MCF 10A (cell line): ENCODE measurements at regions of chr1 and their contacts with region 1.

Region 1: GRCh38 chr1:240128366-240128765 is 36.7 kb downstream of the FMN2 start:
- DNase-seq: no peak
- H3K4me3 Mint-ChIP-seq: no peak overlapping the region
- H3K27ac Mint-ChIP-seq: no peak overlapping the region
- H3K4me1 Mint-ChIP-seq: no peaks in the 10 kb centered on the region
- H3K27me3 Mint-ChIP-seq: no peaks in the 10 kb centered on the region
- CTCF ChIP-seq: no peak

Region 2: DNA sequence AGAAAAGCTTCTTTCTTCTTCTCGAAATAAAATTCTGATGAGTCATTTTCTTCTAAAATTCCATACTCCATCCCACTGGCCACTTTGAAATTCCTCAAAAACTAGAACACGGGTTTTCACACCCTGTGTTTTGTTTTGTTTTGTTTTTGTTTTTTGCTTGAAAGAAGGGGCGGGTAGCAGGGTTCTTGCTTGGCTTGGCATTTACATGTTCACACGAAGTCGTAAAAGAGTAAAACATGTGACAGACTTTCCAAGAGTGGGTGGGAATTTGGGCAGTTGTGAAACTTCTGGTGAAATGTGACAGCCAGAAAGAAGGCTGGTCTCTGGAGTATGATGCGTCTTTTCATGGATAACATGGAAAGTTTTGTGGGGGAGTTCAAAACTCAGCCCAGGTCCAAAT is 83.7 kb before region 1 on chr1:
- CTCF ChIA-PET with region 1: interaction called, 10 read pairs
- POLR2A ChIA-PET with region 1: no interaction called
- intact Hi-C with region 1: no loop called
- DNase-seq: peak; percentile 47
- H3K4me3 Mint-ChIP-seq: no peak overlapping the region
- H3K27ac Mint-ChIP-seq: no peak overlapping the region
- H3K4me1 Mint-ChIP-seq: no peaks in the 10 kb centered on the region
- H3K27me3 Mint-ChIP-seq: no peaks in the 10 kb centered on the region
- CTCF ChIP-seq: no peak